B cell (primary cell): ENCODE measurements at regions of chr5 and their contacts with region 1.

Region 1: DNA sequence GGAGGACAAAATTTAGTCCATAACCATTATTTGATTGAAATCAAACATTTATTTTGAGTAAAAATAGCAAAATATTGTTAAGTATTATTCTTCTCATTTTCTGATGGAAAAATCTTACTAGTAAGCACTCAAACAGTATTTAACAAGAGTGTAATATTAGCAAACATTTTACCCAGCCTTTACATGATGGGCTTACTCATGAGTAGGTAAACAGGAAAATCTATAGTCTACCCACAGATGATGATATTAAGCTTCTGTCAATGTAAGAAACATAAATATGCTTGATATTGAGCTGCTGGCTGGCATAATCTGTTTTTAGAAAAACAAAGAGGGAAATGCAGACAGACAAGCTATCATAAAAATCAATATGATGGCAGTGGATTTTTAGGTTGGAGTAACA is 418.5 kb upstream of the COX7C start:
- DNase-seq: no peak
- ATAC-seq: no peak
- H3K4me3 ChIP-seq: no peak overlapping the region
- H3K4me3 Mint-ChIP-seq: no peak overlapping the region
- H3K27ac ChIP-seq: no peak overlapping the region
- H3K27ac Mint-ChIP-seq: no peak overlapping the region
- H3K4me1 ChIP-seq: no peaks in the 10 kb centered on the region
- H3K4me1 Mint-ChIP-seq: no peaks in the 10 kb centered on the region
- H3K27me3 ChIP-seq: no peaks in the 10 kb centered on the region
- H3K27me3 Mint-ChIP-seq: no peaks in the 10 kb centered on the region
- CTCF ChIP-seq: no peak

Region 2: GRCh38 chr5:85462957-85463356 is 736.3 kb before region 1 on chr5:
- CTCF ChIA-PET with region 1: no interaction called
- POLR2A ChIA-PET with region 1: no interaction called
- intact Hi-C with region 1: no loop called
- DNase-seq: no peak
- ATAC-seq: no peak
- H3K4me3 ChIP-seq: no peak overlapping the region
- H3K4me3 Mint-ChIP-seq: no peak overlapping the region
- H3K27ac ChIP-seq: no peak overlapping the region
- H3K27ac Mint-ChIP-seq: no peak overlapping the region
- H3K4me1 ChIP-seq: no peaks in the 10 kb centered on the region
- H3K4me1 Mint-ChIP-seq: no peaks in the 10 kb centered on the region
- H3K27me3 ChIP-seq: no peaks in the 10 kb centered on the region
- H3K27me3 Mint-ChIP-seq: no peaks in the 10 kb centered on the region
- CTCF ChIP-seq: no peak

Region 3: GRCh38 chr5:86232246-86232645 is 33.0 kb after region 1 on chr5:
- CTCF ChIA-PET with region 1: no interaction called
- POLR2A ChIA-PET with region 1: no interaction called
- intact Hi-C with region 1: loop called (anchors 1 kb)
- DNase-seq: no peak
- ATAC-seq: no peak
- H3K4me3 ChIP-seq: no peak overlapping the region
- H3K4me3 Mint-ChIP-seq: no peak overlapping the region
- H3K27ac ChIP-seq: no peak overlapping the region
- H3K27ac Mint-ChIP-seq: no peak overlapping the region
- H3K4me1 ChIP-seq: no peaks in the 10 kb centered on the region
- H3K4me1 Mint-ChIP-seq: no peaks in the 10 kb centered on the region
- H3K27me3 ChIP-seq: no peaks in the 10 kb centered on the region
- H3K27me3 Mint-ChIP-seq: no peaks in the 10 kb centered on the region
- CTCF ChIP-seq: no peak

Region 4: GRCh38 chr5:86679529-86679928 is 480.2 kb after region 1 on chr5:
- CTCF ChIA-PET with region 1: no interaction called
- POLR2A ChIA-PET with region 1: no interaction called
- intact Hi-C with region 1: no loop called
- DNase-seq: peak; percentile 29
- ATAC-seq: no peak
- H3K4me3 ChIP-seq: no peak overlapping the region
- H3K4me3 Mint-ChIP-seq: no peak overlapping the region
- H3K27ac ChIP-seq: no peak overlapping the region
- H3K27ac Mint-ChIP-seq: no peak overlapping the region
- H3K4me1 ChIP-seq: no peaks in the 10 kb centered on the region
- H3K4me1 Mint-ChIP-seq: no peaks in the 10 kb centered on the region
- H3K27me3 ChIP-seq: no peaks in the 10 kb centered on the region
- H3K27me3 Mint-ChIP-seq: no peaks in the 10 kb centered on the region
- CTCF ChIP-seq: peak; percentile 73